Panc1 (cell line): ENCODE measurements at regions of chr7 and their contacts with region 1.

Region 1: DNA sequence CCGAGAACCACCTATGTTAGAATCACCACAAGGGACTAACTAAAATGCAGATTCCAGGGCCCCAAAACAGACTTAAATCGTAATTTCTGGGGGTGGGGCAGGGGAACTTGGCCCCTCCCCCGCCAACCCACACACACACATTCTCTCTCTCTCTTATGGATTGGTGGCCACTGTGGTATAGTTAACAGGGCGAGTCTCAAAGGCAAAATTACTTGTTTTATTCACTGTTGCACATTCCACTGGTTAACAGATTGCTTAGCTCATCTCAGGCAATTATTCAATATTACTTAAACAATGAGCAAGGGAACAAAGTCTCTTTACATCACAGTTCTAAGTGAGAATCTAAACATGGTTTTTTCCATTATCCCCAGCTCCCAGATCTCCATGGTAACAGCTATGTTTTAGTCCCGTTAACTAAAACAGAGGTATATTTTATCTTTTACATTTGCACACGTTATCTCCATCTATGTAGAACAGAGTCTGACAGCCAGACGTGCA is 38.5 kb downstream of the IGF2BP3 start:
- DNase-seq: no peak
- ATAC-seq: no peak
- H3K4me3 ChIP-seq: no peak overlapping the region
- H3K27ac ChIP-seq: peak overlapping the region; percentile 68
- H3K4me1 ChIP-seq: peaks cover 35% of the 10 kb centered on the region
- H3K27me3 ChIP-seq: no peaks in the 10 kb centered on the region
- CTCF ChIP-seq: no peak

Region 2: GRCh38 chr7:23474094-23474828 is 42.5 kb after region 1 on chr7:
- CTCF ChIA-PET with region 1: no interaction called
- POLR2A ChIA-PET with region 1: no interaction called
- in situ Hi-C with region 1: no loop called
- intact Hi-C with region 1: loop called (anchors 5 kb)
- DNase-seq: no peak
- ATAC-seq: peak; percentile 82
- H3K4me3 ChIP-seq: peak overlapping the region; percentile 88 to 98
- H3K27ac ChIP-seq: peak overlapping the region; percentile 100
- H3K4me1 ChIP-seq: peaks cover 25% of the 10 kb centered on the region
- H3K27me3 ChIP-seq: no peaks in the 10 kb centered on the region
- CTCF ChIP-seq: no peak

Region 3: DNA sequence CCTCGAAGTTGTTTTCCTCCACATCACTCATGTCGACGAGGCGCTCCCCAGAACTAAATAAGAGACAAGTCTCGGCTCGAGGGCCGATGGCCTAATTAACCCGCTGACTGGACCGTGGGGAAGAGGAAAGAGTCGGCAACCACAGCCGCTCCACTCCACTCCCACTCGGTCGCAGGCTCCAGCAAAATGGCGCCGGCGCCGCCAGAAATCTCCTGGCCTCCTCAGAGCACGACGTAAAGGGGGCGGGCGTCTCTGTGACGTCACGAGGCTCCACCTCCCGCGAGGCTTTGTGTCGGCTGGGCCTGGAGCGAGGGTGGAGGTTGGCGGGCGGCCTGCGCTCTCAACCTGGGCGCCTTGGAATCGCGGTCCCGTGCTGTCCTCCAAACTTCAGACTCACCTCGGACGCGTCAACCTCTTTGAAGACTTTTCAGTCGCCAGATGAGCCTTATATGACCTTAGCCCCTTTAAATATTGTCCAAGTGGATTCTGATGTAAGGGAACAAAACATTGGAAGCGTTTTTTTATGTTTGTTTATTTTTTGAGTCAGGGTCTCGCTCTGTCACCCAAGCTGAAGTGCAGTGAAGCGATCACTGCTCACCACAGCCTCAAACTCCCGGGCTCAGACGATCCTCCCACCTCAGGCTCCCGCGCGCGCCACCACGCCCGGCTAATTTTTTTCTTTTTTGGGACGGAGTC is 100.2 kb after region 1 on chr7 and contains the start of gene TRA2A:
- CTCF ChIA-PET with region 1: no interaction called
- POLR2A ChIA-PET with region 1: interaction called, 4 read pairs
- in situ Hi-C with region 1: no loop called
- intact Hi-C with region 1: loop called (anchors 2 kb)
- DNase-seq: peak; percentile 86
- ATAC-seq: peak; percentile 98
- H3K4me3 ChIP-seq: peak within 1 kb of the TSS; percentile 92 to 94
- H3K27ac ChIP-seq: peak within 1 kb of the TSS; percentile 97
- H3K4me1 ChIP-seq: peaks cover 34% of the 10 kb centered on the region
- H3K27me3 ChIP-seq: no peaks in the 10 kb centered on the region
- CTCF ChIP-seq: no peak
- total RNA-seq, gene TRA2A: 106 TPM

Region 4: DNA sequence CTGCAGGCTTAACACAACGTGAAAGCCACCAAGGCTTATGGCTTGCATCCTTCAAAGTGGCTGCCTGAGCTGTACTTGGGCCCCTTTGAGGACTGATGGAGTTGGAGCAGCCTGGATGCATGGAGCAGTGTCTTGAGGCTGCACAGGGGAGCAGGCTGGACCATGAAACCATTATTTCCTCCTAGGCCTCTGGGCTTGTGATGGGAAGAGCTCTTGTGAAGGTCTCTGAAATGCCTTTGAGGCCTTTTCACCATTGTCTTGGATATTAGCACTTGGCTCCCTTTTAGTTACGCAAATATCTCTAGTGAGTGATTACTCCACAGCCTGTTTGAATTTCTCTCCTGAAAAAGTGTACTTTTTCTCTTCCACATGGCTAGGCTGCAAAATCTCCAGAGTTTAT is 651.1 kb after region 1 on chr7:
- CTCF ChIA-PET with region 1: no interaction called
- POLR2A ChIA-PET with region 1: no interaction called
- in situ Hi-C with region 1: no loop called
- intact Hi-C with region 1: loop called (anchors 10 kb)
- DNase-seq: no peak
- ATAC-seq: no peak
- H3K4me3 ChIP-seq: no peak overlapping the region
- H3K27ac ChIP-seq: no peak overlapping the region
- H3K4me1 ChIP-seq: no peaks in the 10 kb centered on the region
- H3K27me3 ChIP-seq: no peaks in the 10 kb centered on the region
- CTCF ChIP-seq: no peak